ENCODE measurements at regions of chr12 and their contacts with region 1.

Region 1: DNA sequence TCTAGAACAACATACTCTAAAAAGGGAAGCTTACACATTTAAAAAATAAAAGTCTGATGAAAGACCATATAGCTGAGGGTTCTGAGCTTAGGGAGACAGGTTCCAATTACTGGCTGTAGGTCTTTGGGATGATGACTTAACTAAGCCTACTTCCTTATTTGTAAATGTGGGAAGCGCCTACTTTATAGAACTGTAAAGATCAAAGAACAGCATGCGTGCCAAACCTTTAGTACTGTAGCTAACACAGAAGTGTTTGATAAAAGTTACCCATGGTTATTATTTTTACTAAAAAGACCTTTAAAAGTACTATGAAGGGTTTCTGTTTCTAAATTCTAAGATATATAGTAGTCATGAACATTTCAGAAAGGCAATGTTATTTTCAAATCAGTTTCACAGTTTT is 35.7 kb downstream of the STK38L start:
- DNase-seq: no peak
- ATAC-seq: no peak
- H3K4me3 ChIP-seq: no peak overlapping the region
- H3K27ac ChIP-seq: no peak overlapping the region
- H3K4me1 ChIP-seq: peaks cover 7% of the 10 kb centered on the region; the same call in 1 of the 2 replicates
- H3K27me3 ChIP-seq: no peaks in the 10 kb centered on the region
- CTCF ChIP-seq: no peak

Region 2: DNA sequence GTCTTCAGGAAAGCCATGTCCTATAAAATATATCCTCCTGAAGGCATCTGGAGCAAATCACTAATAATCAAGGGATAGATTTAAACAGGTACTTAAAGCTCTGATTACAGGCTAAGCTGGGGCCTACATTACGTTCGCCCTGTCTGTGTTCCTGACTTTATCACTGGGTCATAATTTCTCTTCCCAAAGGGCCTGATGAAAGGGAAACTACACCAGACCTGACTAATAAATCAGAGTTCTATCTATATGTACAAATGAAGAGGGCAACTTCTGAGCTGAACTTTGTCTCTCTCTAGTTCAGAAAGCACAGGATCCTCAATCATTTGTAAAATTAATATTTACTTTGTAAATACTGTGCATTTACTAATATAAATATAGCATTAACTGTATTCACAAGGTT is 1365.2 kb before region 1 on chr12:
- CTCF ChIA-PET with region 1: no interaction called
- POLR2A ChIA-PET with region 1: interaction called, 10 read pairs
- in situ Hi-C with region 1: no loop called
- intact Hi-C with region 1: no loop called
- DNase-seq: no peak
- ATAC-seq: no peak
- H3K4me3 ChIP-seq: no peak overlapping the region
- H3K27ac ChIP-seq: no peak overlapping the region
- H3K4me1 ChIP-seq: no peaks in the 10 kb centered on the region
- H3K27me3 ChIP-seq: no peaks in the 10 kb centered on the region; the same call in 1 of the 2 replicates
- CTCF ChIP-seq: no peak

Region 3: GRCh38 chr12:26832822-26833742 is 446.7 kb before region 1 on chr12 and contains the start of gene ITPR2:
- CTCF ChIA-PET with region 1: interaction called, 13 read pairs
- POLR2A ChIA-PET with region 1: no interaction called
- in situ Hi-C with region 1: no loop called
- intact Hi-C with region 1: no loop called
- DNase-seq: no peak
- ATAC-seq: peak; percentile 95
- H3K4me3 ChIP-seq: peak within 1 kb of the TSS; percentile 92 to 96
- H3K27ac ChIP-seq: peak within 1 kb of the TSS; percentile 94
- H3K4me1 ChIP-seq: peaks cover 25% of the 10 kb centered on the region
- H3K27me3 ChIP-seq: no peaks in the 10 kb centered on the region
- CTCF ChIP-seq: peak; percentile 95
- total RNA-seq, gene ITPR2: 41.8 TPM

Region 4: GRCh38 chr12:27109334-27110028 is 170.3 kb before region 1 on chr12:
- CTCF ChIA-PET with region 1: no interaction called
- POLR2A ChIA-PET with region 1: no interaction called
- in situ Hi-C with region 1: no loop called
- intact Hi-C with region 1: no loop called
- DNase-seq: no peak
- ATAC-seq: no peak
- H3K4me3 ChIP-seq: no peak overlapping the region
- H3K27ac ChIP-seq: no peak overlapping the region
- H3K4me1 ChIP-seq: no peaks in the 10 kb centered on the region
- H3K27me3 ChIP-seq: 0 out of 2 replicates have a peak, but pooled peaks cover 2% of the 10 kb centered on the region
- CTCF ChIP-seq: no peak

Region 5: GRCh38 chr12:27555925-27556778 is 276.3 kb after region 1 on chr12:
- CTCF ChIA-PET with region 1: no interaction called
- POLR2A ChIA-PET with region 1: no interaction called
- in situ Hi-C with region 1: no loop called
- intact Hi-C with region 1: no loop called
- DNase-seq: no peak
- ATAC-seq: no peak
- H3K4me3 ChIP-seq: peak overlapping the region; percentile 19 to 29
- H3K27ac ChIP-seq: peak overlapping the region; percentile 97
- H3K4me1 ChIP-seq: peaks cover 77% of the 10 kb centered on the region
- H3K27me3 ChIP-seq: no peaks in the 10 kb centered on the region
- CTCF ChIP-seq: no peak

Measured in Panc1 (cell line).